Right cardiac atrium (tissue), 5 donors: ENCODE measurements at regions of chr13 and their contacts with region 1.

Region 1: DNA sequence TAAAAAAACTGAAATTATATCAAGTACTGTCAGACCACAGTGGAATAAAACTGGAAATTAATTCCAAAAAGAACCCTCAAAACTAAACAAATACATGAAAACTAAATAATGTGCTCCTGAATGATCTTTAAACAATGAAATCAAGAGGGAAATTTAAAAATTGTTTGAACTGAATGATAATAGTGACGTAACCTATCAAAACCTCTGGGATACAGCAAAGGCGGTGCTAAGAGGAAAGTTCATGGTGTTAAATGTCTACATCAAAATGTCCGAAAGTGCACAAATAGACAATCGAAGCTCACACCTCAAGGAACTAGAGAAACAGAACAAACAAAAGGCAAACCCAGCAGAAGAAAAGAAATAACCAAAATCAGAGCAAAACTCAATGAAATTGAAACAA is 70.8 kb upstream of the TUBA3C start:
- DNase-seq: no peak
- ATAC-seq: no peak
- H3K4me3 ChIP-seq: no peak overlapping the region
- H3K27ac ChIP-seq: no peak overlapping the region
- H3K4me1 ChIP-seq: no peaks in the 10 kb centered on the region
- H3K27me3 ChIP-seq: no peaks in the 10 kb centered on the region

Region 2: DNA sequence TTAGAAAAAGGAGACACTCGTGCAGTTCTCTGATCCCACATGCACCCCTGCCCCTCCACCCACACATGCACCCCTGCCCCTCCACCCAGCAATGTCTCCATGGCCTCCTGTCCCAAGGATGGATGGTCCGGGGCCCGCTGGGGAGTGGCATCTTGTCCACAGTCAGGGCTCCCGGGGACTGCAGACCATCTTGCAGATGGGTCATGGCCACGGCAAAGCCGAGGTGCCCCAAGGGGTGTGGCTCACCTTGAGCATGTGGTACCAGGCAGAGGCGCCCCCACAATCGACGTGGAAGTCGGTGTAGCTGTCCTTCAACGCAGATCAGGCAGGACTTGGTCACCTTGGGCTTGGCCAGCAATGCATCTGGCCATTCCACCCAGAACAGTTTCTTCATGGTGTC is 287.4 kb before region 1 on chr13:
- intact Hi-C with region 1: no loop called
- DNase-seq: no peak
- ATAC-seq: no peak
- H3K4me3 ChIP-seq: no peak overlapping the region
- H3K27ac ChIP-seq: no peak overlapping the region
- H3K4me1 ChIP-seq: no peaks in the 10 kb centered on the region
- H3K27me3 ChIP-seq: no peaks in the 10 kb centered on the region

Region 3: DNA sequence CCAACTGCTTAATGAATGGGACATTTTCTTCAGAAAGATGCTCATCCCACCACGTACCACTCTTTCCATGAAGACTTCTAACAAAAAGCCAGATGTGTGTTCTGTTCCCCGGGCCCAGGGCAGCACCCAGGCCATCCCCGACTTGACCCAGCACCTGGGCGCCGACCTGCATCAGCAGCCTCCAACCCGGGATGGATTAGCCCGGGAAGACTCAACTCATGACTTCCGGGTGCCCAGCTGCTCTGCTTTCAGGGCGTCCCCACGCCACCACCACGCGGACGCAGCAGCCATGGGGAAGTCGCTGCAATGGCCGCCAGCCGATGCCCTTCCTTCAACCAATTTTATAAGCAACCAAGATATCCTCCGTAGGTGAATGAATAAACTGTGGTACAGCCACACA is 53.1 kb after region 1 on chr13:
- intact Hi-C with region 1: loop called in 1 of 4 experiments (anchors 10 kb)
- DNase-seq: peak in 1 of 3 donors; percentile 20
- ATAC-seq: no peak
- H3K4me3 ChIP-seq: no peak overlapping the region
- H3K27ac ChIP-seq: no peak overlapping the region
- H3K4me1 ChIP-seq: no peaks in the 10 kb centered on the region
- H3K27me3 ChIP-seq: no peaks in the 10 kb centered on the region